Astrocyte of the cerebellum (primary cell): ENCODE measurements at regions of chr4 and their contacts with region 1.

Region 1: GRCh38 chr4:124318292-124318691 is 394.2 kb downstream of the ANKRD50 start:
- DNase-seq: no peak
- H3K4me3 ChIP-seq: no peak overlapping the region
- CTCF ChIP-seq: no peak

Region 2: DNA sequence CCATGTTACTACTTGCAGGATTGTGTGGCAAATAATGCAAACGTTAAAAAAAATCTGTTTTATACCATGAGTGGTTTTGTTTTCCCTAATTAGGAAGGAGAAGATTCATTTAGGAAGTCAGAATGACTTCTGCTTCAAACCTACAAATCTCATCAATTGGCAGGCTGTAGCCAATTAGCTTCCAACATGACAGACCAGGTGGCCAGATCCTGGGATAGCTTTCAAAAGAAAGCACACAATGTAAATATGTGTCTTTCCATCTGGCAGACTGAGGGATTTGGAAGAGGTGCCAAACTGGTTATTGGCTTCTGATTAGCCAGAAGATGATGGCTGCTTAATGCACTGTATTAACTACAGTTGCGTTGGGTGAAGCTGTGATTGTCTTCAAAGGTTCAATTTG is 38.6 kb before region 1 on chr4:
- in situ Hi-C with region 1: loop called (anchors 5 kb)
- DNase-seq: no peak
- H3K4me3 ChIP-seq: no peak overlapping the region
- CTCF ChIP-seq: no peak